Activated T-helper 2 cell treated with anti-CD3 and anti-CD28 coated beads, Interferon-gamma antibody, Interleukin-2, Interleukin-4, amounts not matched to agents 10 μg/mL and 5 μg/mL and 100 μg/mL, durations not matched to agents 14 hours and 24 hours and 36 hours (primary cell): ENCODE measurements at regions of chr21 and their contacts with region 1.

Region 1: DNA sequence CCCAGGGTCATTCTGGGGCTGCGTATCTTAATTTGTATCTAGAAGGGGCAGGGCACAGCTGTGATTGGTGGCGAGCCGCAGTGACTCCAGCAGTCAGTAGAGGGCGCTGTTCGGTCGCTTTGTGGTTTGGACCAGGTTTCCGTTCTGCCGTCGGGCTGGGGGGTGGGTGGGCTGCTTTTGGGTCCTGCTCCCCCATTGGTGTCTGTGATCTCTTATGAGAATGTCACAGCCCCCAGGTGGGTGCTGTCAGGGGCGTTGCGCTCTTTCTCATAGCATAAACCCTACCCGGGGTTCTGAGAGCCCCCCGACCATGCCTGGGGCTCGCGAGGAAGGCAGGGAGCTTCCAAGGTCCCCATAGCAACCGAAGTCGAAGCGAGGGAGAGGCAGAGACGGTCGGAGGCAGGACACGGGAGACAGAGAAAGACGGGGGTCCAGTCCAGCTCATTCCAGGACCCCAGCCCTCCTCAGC is 5.4 kb downstream of the TFF3 start:
- DNase-seq: peak; percentile 66
- H3K4me3 Mint-ChIP-seq: no peak overlapping the region
- H3K27ac Mint-ChIP-seq: no peak overlapping the region
- H3K4me1 Mint-ChIP-seq: peaks cover 2% of the 10 kb centered on the region
- H3K27me3 Mint-ChIP-seq: peaks cover 8% of the 10 kb centered on the region

Region 2: DNA sequence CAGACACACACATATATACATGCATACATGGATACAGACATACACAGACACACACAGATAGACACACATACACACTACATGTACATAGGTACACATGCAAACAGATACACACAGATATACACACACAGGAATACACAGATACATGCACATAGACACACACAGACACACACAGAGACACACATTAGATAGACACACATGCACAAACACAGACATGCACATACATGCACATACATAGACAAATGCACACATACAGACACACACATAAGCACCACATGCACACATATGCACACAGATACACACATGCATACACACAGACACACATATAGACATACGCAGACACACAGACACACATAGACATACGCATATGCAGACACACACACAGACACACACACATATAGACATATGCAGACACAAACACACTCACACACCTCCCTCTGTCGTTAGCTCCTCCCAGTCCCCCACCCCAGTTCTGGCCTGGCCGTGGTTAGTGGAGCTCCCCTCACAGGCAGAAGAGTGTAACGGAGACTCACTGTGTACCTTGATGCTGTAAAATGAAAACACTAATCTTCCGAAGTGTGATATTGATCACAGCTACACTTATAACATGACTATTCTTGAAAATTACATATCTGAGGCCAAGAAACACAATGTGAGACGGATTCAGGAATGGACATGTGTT is 101.5 kb after region 1 on chr21:
- intact Hi-C with region 1: no loop called
- DNase-seq: no peak
- H3K4me3 Mint-ChIP-seq: no peak overlapping the region
- H3K27ac Mint-ChIP-seq: no peak overlapping the region
- H3K4me1 Mint-ChIP-seq: peaks cover 59% of the 10 kb centered on the region
- H3K27me3 Mint-ChIP-seq: no peaks in the 10 kb centered on the region

Region 3: DNA sequence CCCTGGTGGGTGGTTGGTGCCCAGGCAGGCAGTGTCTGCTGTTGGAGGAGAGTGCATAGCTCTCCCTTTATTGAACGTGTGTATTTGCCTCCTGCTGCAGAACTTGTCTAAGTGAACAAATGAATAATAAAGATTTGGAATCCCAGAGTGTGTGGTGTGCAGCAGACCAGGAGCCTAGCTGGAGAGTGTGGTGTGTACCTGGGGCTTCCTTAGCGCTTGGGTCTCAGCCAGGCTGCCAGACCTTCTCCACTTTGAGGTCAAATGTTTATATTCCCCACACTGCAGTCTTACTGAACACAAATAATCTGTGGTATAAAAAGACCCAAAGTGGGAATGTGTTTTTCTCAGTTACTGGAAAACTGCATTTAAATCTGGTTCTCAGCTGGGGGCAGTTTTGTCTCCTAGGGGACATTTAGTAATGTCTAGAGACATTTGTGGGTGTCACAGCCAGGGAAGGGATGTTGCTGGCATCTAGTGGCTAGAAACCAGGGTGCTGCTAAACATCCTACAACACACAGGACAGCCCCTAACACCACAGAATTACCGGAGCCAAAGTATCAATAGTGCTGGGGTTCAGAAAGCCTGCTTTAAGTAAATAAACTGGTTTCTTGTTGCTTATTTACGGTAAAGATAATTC is 227.4 kb after region 1 on chr21:
- intact Hi-C with region 1: loop called (anchors 10 kb)
- DNase-seq: no peak
- H3K4me3 Mint-ChIP-seq: no peak overlapping the region
- H3K27ac Mint-ChIP-seq: no peak overlapping the region
- H3K4me1 Mint-ChIP-seq: peaks cover 4% of the 10 kb centered on the region
- H3K27me3 Mint-ChIP-seq: no peaks in the 10 kb centered on the region